ENCODE measurements at regions of chr19 and their contacts with region 1.

Region 1: DNA sequence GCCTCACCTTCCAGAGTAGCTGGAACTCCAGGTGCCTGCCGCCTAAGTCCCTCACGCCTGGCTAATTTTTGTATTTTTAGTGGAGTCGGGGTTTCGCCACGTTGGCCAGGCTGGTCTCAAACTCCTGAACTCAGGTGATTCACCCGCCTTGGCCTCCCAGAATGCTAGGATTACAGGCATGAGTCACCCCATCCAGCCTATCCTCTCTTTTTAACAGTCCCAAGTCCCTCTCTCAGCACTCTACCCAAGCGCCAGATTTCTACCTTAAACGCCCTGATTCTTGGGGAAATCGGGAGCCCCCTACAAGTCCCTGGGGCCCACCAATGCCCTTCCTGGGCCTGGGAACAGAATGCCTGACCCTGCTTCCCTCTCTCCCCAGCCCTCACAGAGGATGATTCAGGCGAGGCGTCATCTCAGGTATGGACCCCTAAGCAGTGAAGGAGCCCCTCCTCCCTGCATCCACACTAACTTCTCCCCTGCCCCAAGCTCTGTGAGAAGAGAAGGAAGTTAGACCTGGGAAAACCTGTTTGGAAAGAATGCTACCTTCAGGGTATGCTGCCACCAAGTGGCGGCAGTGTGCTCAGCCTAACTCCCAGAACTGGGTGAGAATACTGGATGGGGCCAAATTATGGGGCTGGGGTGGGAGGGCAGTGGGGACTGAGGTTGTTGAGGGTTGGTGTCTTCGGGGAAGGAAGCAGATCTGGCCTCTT is 20.8 kb upstream of the EBI3 start:
- DNase-seq: peak; percentile 40
- H3K4me3 ChIP-seq: no peak overlapping the region
- H3K27ac ChIP-seq: no peak overlapping the region
- H3K4me1 ChIP-seq: peaks cover 0 to 4% (median 1%) of the 10 kb centered on the region in 4 donors
- H3K27me3 ChIP-seq: peaks cover 13% of the 10 kb centered on the region
- CTCF ChIP-seq: peak in 4 of 5 experiments; percentile 12 to 41 (median 34)
- EP300 ChIP-seq: no peak
- POLR2A ChIP-seq: no peak

Region 2: GRCh38 chr19:3849094-3849493 is 359.4 kb before region 1 on chr19:
- in situ Hi-C with region 1: loop called in 1 of 4 experiments (anchors 25 kb)
- intact Hi-C with region 1: no loop called
- DNase-seq: peak; percentile 22
- H3K4me3 ChIP-seq: no peak overlapping the region
- H3K27ac ChIP-seq: no peak overlapping the region
- H3K4me1 ChIP-seq: no peaks in the 10 kb centered on the region
- H3K27me3 ChIP-seq: no peaks in the 10 kb centered on the region
- CTCF ChIP-seq: peak in 4 of 5 experiments; percentile 19 to 36 (median 28)
- EP300 ChIP-seq: no peak
- POLR2A ChIP-seq: no peak

Measured in transverse colon (tissue), 4 donors.